Calu3 (cell line): ENCODE measurements at regions of chr12 and their contacts with region 1.

Region 1: DNA sequence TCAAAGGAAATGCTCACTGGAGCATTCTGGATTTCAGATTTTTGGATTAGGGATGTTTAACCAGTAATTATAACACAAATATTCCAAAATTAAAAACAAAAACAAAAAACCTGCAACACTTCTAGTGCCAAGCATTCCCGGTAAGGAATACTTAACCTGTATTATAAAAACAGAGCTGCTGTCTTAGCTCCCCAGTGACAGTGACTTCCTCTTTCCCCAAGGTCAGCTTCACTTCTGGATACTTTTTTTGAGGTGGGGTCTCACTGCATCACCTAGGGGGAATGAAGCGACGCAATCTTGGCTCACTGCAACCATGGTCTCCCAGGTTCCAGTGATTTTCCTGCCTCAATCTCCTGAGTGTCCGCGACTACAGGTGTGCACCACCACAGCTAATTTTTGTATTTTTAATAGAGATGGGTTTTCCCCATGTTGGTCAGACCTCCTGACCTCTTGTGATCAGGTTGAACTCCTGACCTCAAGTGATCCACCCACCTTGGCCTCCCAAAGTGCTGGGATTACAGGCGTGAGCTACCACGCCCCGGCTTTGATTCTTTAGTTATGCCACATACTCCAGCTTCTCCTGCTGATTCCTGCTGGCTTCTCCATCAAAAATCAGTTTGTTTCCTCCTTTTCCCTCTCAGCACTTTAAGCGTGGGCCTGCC is 15.9 kb downstream of the PPP1CC start:
- DNase-seq: no peak
- H3K4me3 Mint-ChIP-seq: no peak overlapping the region
- H3K27ac Mint-ChIP-seq: no peak overlapping the region
- H3K4me1 Mint-ChIP-seq: peaks cover 9% of the 10 kb centered on the region
- H3K27me3 Mint-ChIP-seq: no peaks in the 10 kb centered on the region
- CTCF ChIP-seq: no peak

Region 2: GRCh38 chr12:110741341-110742095 is 14.7 kb after region 1 on chr12:
- CTCF ChIA-PET with region 1: interaction called, 4 read pairs
- intact Hi-C with region 1: loop called (anchors 2 kb)
- DNase-seq: no peak
- H3K4me3 Mint-ChIP-seq: peak overlapping the region; percentile 96
- H3K27ac Mint-ChIP-seq: peak overlapping the region; percentile 89
- H3K4me1 Mint-ChIP-seq: peaks cover 56% of the 10 kb centered on the region
- H3K27me3 Mint-ChIP-seq: no peaks in the 10 kb centered on the region
- CTCF ChIP-seq: no peak